CD4-positive, alpha-beta memory T cell (primary cell): ENCODE measurements at regions of chr20 and their contacts with region 1.

Region 1: GRCh38 chr20:17968366-17969279 is at the starts of genes MGME1 and SNX5:
- DNase-seq: peak; percentile 99 to 100 (median 99)
- H3K4me3 ChIP-seq: peak within 1 kb of the TSS; percentile 90 to 95
- H3K4me3 Mint-ChIP-seq: peak within 1 kb of the TSS; percentile 86 to 97 (median 94)
- H3K27ac ChIP-seq: peak within 1 kb of the TSS; percentile 82
- H3K27ac Mint-ChIP-seq: peak within 1 kb of the TSS; percentile 97 to 99 (median 98)
- H3K4me1 ChIP-seq: peaks cover 66% of the 10 kb centered on the region
- H3K4me1 Mint-ChIP-seq: peaks cover 51 to 92% (median 63%) of the 10 kb centered on the region in 4 donors
- H3K27me3 ChIP-seq: no peaks in the 10 kb centered on the region
- H3K27me3 Mint-ChIP-seq: peaks cover 0 to 1% of the 10 kb centered on the region in 2 donors
- total RNA-seq, gene MGME1: 15.4 to 16.5 TPM
- total RNA-seq, gene SNX5: 81.5 to 81.6 TPM

Region 2: GRCh38 chr20:16573001-16573965 is 1395.3 kb before region 1 on chr20 and contains the start of gene KIF16B:
- CTCF ChIA-PET with region 1: no interaction called
- POLR2A ChIA-PET with region 1: no interaction called
- intact Hi-C with region 1: loop called (anchors 10 kb)
- DNase-seq: peak; percentile 71 to 80 (median 79)
- H3K4me3 ChIP-seq: peak within 1 kb of the TSS; percentile 57 to 93
- H3K4me3 Mint-ChIP-seq: peak within 1 kb of the TSS; percentile 89 to 95 (median 93)
- H3K27ac ChIP-seq: peak within 1 kb of the TSS; percentile 61
- H3K27ac Mint-ChIP-seq: peak within 1 kb of the TSS; percentile 71 to 89 (median 84)
- H3K4me1 ChIP-seq: peaks cover 35% of the 10 kb centered on the region
- H3K4me1 Mint-ChIP-seq: peaks cover 21 to 60% (median 42%) of the 10 kb centered on the region in 4 donors
- H3K27me3 ChIP-seq: no peaks in the 10 kb centered on the region
- H3K27me3 Mint-ChIP-seq: no peaks in the 10 kb centered on the region
- total RNA-seq, gene KIF16B: 12.0 TPM

Region 3: GRCh38 chr20:17569616-17570346 is 398.8 kb before region 1 on chr20 and contains the start of gene DSTN:
- CTCF ChIA-PET with region 1: no interaction called
- POLR2A ChIA-PET with region 1: interaction called, 9 read pairs
- intact Hi-C with region 1: loop called (anchors 2 kb)
- DNase-seq: peak; percentile 87 to 91 (median 90)
- H3K4me3 ChIP-seq: peak within 1 kb of the TSS; percentile 73 to 84
- H3K4me3 Mint-ChIP-seq: peak within 1 kb of the TSS; percentile 94 to 97 (median 96)
- H3K27ac ChIP-seq: peak within 1 kb of the TSS; percentile 83
- H3K27ac Mint-ChIP-seq: peak within 1 kb of the TSS; percentile 70 to 97 (median 96)
- H3K4me1 ChIP-seq: peaks cover 35% of the 10 kb centered on the region
- H3K4me1 Mint-ChIP-seq: peaks cover 23 to 37% (median 28%) of the 10 kb centered on the region in 4 donors
- H3K27me3 ChIP-seq: no peaks in the 10 kb centered on the region
- H3K27me3 Mint-ChIP-seq: no peaks in the 10 kb centered on the region
- total RNA-seq, gene DSTN: 43.1 to 49.1 TPM

Region 4: DNA sequence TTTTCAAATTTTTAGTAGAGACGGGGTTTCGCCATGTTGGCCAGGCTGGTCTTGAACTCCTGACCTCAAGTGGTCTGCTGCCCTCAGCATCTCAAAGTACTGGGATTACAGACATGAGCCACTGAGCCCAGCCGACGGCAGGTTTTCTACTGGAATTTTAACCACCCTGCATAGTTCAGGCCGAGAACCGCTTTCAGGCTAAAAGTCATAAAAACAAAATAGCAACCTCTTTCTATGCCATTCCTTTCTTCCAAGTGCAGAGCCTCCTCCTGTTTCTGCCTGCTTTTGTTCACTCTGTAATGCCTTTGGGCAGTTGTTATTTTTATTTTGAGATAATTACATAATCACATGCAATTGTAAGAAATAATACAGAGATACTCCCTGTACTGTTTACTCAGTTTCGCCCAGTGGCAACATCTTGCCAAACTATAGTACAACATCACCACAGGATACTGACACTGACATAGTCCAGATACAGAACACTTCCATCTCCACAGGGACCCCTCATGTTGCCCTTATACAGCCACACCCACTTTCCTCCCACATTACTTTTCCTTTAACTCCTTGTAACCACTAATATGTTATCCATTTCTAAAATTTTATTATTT is 209.3 kb before region 1 on chr20:
- CTCF ChIA-PET with region 1: no interaction called
- POLR2A ChIA-PET with region 1: no interaction called
- intact Hi-C with region 1: no loop called
- DNase-seq: no peak
- H3K4me3 ChIP-seq: no peak overlapping the region
- H3K4me3 Mint-ChIP-seq: no peak overlapping the region
- H3K27ac ChIP-seq: no peak overlapping the region
- H3K27ac Mint-ChIP-seq: no peak overlapping the region
- H3K4me1 ChIP-seq: no peaks in the 10 kb centered on the region
- H3K4me1 Mint-ChIP-seq: no peaks in the 10 kb centered on the region
- H3K27me3 ChIP-seq: no peaks in the 10 kb centered on the region
- H3K27me3 Mint-ChIP-seq: peaks cover 3 to 10% of the 10 kb centered on the region in 2 donors

Region 5: GRCh38 chr20:17952692-17953684 is 15.6 kb before region 1 on chr20:
- CTCF ChIA-PET with region 1: interaction called, 37 read pairs
- POLR2A ChIA-PET with region 1: interaction called, 72 read pairs
- intact Hi-C with region 1: no loop called
- DNase-seq: no peak
- H3K4me3 ChIP-seq: no peak overlapping the region
- H3K4me3 Mint-ChIP-seq: no peak overlapping the region
- H3K27ac ChIP-seq: no peak overlapping the region
- H3K27ac Mint-ChIP-seq: peak overlapping the region in 5 of 7 donors; percentile 18 to 71 (median 55)
- H3K4me1 ChIP-seq: peaks cover 28% of the 10 kb centered on the region
- H3K4me1 Mint-ChIP-seq: peaks cover 12 to 41% (median 23%) of the 10 kb centered on the region in 4 donors
- H3K27me3 ChIP-seq: no peaks in the 10 kb centered on the region
- H3K27me3 Mint-ChIP-seq: no peaks in the 10 kb centered on the region

Region 6: GRCh38 chr20:17995967-17996819 is 27.6 kb after region 1 on chr20:
- CTCF ChIA-PET with region 1: interaction called, 44 read pairs
- POLR2A ChIA-PET with region 1: interaction called, 9 read pairs
- intact Hi-C with region 1: loop called (anchors 1 kb)
- DNase-seq: peak; percentile 55 to 68 (median 64)
- H3K4me3 ChIP-seq: no peak overlapping the region
- H3K4me3 Mint-ChIP-seq: peak overlapping the region in 1 of 8 donors; percentile 29
- H3K27ac ChIP-seq: no peak overlapping the region
- H3K27ac Mint-ChIP-seq: peak overlapping the region in 1 of 7 donors; percentile 6
- H3K4me1 ChIP-seq: peaks cover 18% of the 10 kb centered on the region
- H3K4me1 Mint-ChIP-seq: peaks cover 13 to 27% (median 19%) of the 10 kb centered on the region in 4 donors
- H3K27me3 ChIP-seq: no peaks in the 10 kb centered on the region
- H3K27me3 Mint-ChIP-seq: peaks cover 0 to 3% of the 10 kb centered on the region in 2 donors

Region 7: GRCh38 chr20:18287915-18288748 is 319.5 kb after region 1 on chr20 and contains the start of gene ZNF133:
- CTCF ChIA-PET with region 1: no interaction called
- POLR2A ChIA-PET with region 1: interaction called, 6 read pairs
- intact Hi-C with region 1: loop called (anchors 1 kb)
- DNase-seq: peak; percentile 96 to 99 (median 97)
- H3K4me3 ChIP-seq: peak within 1 kb of the TSS; percentile 87 to 99
- H3K4me3 Mint-ChIP-seq: peak within 1 kb of the TSS; percentile 92 to 99 (median 98)
- H3K27ac ChIP-seq: peak within 1 kb of the TSS; percentile 95
- H3K27ac Mint-ChIP-seq: peak within 1 kb of the TSS; percentile 98 to 100 (median 100)
- H3K4me1 ChIP-seq: peaks cover 19% of the 10 kb centered on the region
- H3K4me1 Mint-ChIP-seq: peaks cover 19 to 34% (median 25%) of the 10 kb centered on the region in 4 donors
- H3K27me3 ChIP-seq: peaks cover 11% of the 10 kb centered on the region
- H3K27me3 Mint-ChIP-seq: peaks cover 11 to 19% of the 10 kb centered on the region in 2 donors
- total RNA-seq, gene ZNF133: 9.1 to 11.8 TPM

Region 8: DNA sequence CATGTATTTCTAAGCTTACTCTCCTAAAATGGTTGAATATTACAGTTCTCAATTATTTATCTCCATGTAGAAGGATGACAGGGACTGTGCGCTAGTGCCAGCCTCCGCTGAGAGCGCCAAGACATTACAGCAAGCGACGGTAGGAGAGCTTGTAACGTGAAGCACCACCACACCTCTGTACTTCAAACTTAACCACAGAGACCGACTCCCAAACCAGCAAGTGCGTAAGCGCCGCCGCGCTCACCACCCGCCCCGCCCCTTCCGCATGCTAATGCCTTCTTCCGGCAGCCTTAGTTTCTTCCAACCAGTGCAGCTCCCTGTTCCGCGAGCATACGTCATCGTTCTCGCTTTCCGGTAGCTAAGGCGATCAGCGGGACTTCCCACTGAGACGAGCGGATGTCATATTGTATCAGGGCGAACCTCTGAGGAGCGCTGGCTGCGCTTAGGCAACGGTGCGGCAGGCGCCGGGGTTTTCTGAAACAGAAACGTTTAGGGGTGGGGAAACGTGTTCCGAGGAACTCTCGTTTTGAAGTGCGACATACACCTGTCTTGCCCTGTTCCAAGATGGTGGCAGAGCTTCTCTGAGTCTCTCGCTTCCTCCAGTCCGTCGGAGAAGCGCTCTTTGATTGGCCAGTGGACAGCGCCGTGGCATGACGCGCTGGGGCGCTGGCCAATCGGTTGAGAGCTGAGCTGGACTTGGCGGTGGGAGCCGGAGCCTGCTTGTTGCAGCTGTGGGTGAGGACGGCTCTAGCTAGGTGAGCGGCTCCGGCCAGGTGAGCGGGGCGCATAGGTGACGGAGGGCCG is 538.8 kb after region 1 on chr20 and contains the start of gene SEC23B:
- CTCF ChIA-PET with region 1: no interaction called
- POLR2A ChIA-PET with region 1: interaction called, 24 read pairs
- intact Hi-C with region 1: loop called (anchors 1 kb)
- DNase-seq: peak; percentile 99 to 100 (median 99)
- H3K4me3 ChIP-seq: peak within 1 kb of the TSS; percentile 78 to 82
- H3K4me3 Mint-ChIP-seq: peak within 1 kb of the TSS; percentile 99 to 100 (median 100)
- H3K27ac ChIP-seq: peak within 1 kb of the TSS; percentile 87
- H3K27ac Mint-ChIP-seq: peak within 1 kb of the TSS; percentile 95 to 100 (median 100)
- H3K4me1 ChIP-seq: peaks cover 22% of the 10 kb centered on the region
- H3K4me1 Mint-ChIP-seq: peaks cover 24 to 48% (median 39%) of the 10 kb centered on the region in 4 donors
- H3K27me3 ChIP-seq: no peaks in the 10 kb centered on the region
- H3K27me3 Mint-ChIP-seq: peaks cover 0 to under 1% of the 10 kb centered on the region in 2 donors
- total RNA-seq, gene SEC23B: 46.8 to 50.0 TPM